Aorta (tissue), 5 donors: ENCODE measurements at regions of chr20 and their contacts with region 1.

Region 1: GRCh38 chr20:57661199-57662027 is 41.2 kb upstream of the ZBP1 start:
- DNase-seq: peak; percentile 59 to 79
- ATAC-seq: no peak
- H3K4me3 ChIP-seq: no peak overlapping the region
- H3K27ac ChIP-seq: no peak overlapping the region
- H3K4me1 ChIP-seq: no peaks in the 10 kb centered on the region
- H3K27me3 ChIP-seq: no peaks in the 10 kb centered on the region

Region 2: GRCh38 chr20:57498425-57499400 is 162.7 kb before region 1 on chr20:
- intact Hi-C with region 1: no loop called
- DNase-seq: no peak
- ATAC-seq: no peak
- H3K4me3 ChIP-seq: no peak overlapping the region
- H3K27ac ChIP-seq: no peak overlapping the region
- H3K4me1 ChIP-seq: peaks cover 0 to 1% of the 10 kb centered on the region in 2 donors
- H3K27me3 ChIP-seq: no peaks in the 10 kb centered on the region

Region 3: DNA sequence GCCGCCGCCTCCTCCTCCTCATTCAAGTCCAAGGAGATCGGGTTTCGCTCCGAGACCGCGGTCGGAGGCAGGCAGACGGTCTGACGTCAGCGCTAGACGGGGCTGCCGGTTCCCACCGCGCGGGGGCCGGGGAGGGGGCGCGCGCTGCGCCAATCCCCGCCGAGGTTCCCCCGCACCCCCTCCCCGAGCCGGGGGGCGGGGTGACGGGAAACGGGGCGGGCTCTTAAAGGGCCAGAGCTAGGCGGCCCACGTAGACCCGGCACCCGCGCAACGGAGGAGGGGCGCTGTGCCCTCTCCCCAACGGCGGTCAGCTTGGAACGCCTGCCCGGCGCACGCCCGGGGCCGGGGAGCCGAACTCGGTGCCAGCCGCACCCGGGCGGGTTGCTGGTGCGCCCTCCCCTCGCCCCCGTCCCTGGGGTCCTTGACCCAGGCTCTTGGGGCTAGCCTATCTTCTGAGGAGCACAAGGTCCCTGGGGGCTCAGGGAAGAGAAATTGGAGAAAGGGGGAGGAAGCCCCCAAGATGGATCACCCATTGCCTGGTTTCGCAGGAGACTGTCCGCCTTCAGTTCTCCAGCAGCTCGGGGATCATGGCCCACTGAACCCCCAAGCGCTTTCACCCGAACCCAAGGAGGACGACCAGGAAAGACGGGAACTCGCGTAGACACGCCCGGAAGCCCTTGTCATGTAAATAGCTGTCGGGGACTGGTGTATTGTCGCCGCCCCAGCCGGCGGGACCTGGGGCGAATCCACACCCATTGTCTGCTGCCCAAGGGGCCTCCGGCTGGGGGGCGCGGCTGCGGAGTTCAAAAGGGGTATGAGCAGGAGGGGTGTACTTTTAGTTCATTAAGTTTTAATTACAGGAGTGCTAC is 48.8 kb after region 1 on chr20 and contains the start of gene PMEPA1:
- intact Hi-C with region 1: loop called (anchors 5 kb)
- DNase-seq: peak; percentile 97
- ATAC-seq: peak; percentile 92
- H3K4me3 ChIP-seq: peak within 1 kb of the TSS; percentile 91 to 92
- H3K27ac ChIP-seq: peak within 1 kb of the TSS; percentile 81 to 93
- H3K4me1 ChIP-seq: no peaks in the 10 kb centered on the region
- H3K27me3 ChIP-seq: no peaks in the 10 kb centered on the region
- total RNA-seq, gene PMEPA1: 167 to 188 TPM

Region 4: GRCh38 chr20:57964011-57964862 is 302.8 kb after region 1 on chr20:
- intact Hi-C with region 1: loop called in 1 of 2 experiments (anchors 10 kb)
- DNase-seq: peak; percentile 64 to 72
- ATAC-seq: peak; percentile 61
- H3K4me3 ChIP-seq: no peak overlapping the region
- H3K27ac ChIP-seq: peak overlapping the region in 1 of 2 donors; percentile 76
- H3K4me1 ChIP-seq: no peaks in the 10 kb centered on the region
- H3K27me3 ChIP-seq: no peaks in the 10 kb centered on the region